ENCODE measurements at regions of chr7 and their contacts with region 1.

Region 1: GRCh38 chr7:104923010-104923421 is 91.0 kb upstream of the KMT2E start:
- DNase-seq: peak; percentile 87
- H3K4me3 Mint-ChIP-seq: no peak overlapping the region
- H3K27ac Mint-ChIP-seq: peak overlapping the region; percentile 18
- H3K4me1 Mint-ChIP-seq: peaks cover 4% of the 10 kb centered on the region
- H3K27me3 Mint-ChIP-seq: no peaks in the 10 kb centered on the region

Region 2: GRCh38 chr7:104231054-104232046 is 691.7 kb before region 1 on chr7:
- CTCF ChIA-PET with region 1: interaction called, 26 read pairs
- POLR2A ChIA-PET with region 1: no interaction called
- intact Hi-C with region 1: loop called (anchors 1 kb)
- DNase-seq: peak; percentile 46
- H3K4me3 Mint-ChIP-seq: no peak overlapping the region
- H3K27ac Mint-ChIP-seq: no peak overlapping the region
- H3K4me1 Mint-ChIP-seq: no peaks in the 10 kb centered on the region
- H3K27me3 Mint-ChIP-seq: peaks cover 10% of the 10 kb centered on the region

Region 3: GRCh38 chr7:104288137-104288536 is 634.9 kb before region 1 on chr7:
- CTCF ChIA-PET with region 1: no interaction called
- POLR2A ChIA-PET with region 1: no interaction called
- intact Hi-C with region 1: no loop called
- DNase-seq: no peak
- H3K4me3 Mint-ChIP-seq: no peak overlapping the region
- H3K27ac Mint-ChIP-seq: no peak overlapping the region
- H3K4me1 Mint-ChIP-seq: no peaks in the 10 kb centered on the region
- H3K27me3 Mint-ChIP-seq: peaks cover 9% of the 10 kb centered on the region

Region 4: DNA sequence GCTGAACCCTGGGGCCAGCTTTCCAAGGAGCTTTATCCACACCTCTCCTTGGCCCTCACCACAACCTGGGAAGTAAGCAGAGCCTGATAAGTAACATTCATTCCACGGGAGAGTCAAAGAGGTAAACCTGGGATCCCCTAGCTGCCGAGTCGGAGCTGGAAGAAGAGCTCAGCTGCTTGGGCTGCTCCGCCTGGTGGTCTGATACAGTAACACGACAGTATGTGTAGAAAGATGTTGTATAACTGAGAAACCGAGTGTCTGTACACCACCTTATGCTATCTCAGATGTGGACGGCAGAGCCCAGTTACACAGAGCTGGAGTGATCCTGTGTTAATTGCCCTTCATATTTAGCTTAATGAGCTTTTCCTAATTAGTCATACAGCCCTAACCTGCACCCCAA is 60.3 kb before region 1 on chr7:
- CTCF ChIA-PET with region 1: no interaction called
- POLR2A ChIA-PET with region 1: no interaction called
- intact Hi-C with region 1: loop called (anchors 5 kb)
- DNase-seq: no peak
- H3K4me3 Mint-ChIP-seq: no peak overlapping the region
- H3K27ac Mint-ChIP-seq: no peak overlapping the region
- H3K4me1 Mint-ChIP-seq: peaks cover 10% of the 10 kb centered on the region
- H3K27me3 Mint-ChIP-seq: peaks cover 16% of the 10 kb centered on the region

Region 5: GRCh38 chr7:104983578-104984539 is 60.8 kb after region 1 on chr7:
- CTCF ChIA-PET with region 1: interaction called, 76 read pairs
- POLR2A ChIA-PET with region 1: no interaction called
- intact Hi-C with region 1: loop called (anchors 1 kb)
- DNase-seq: peak; percentile 91
- H3K4me3 Mint-ChIP-seq: peak overlapping the region; percentile 100
- H3K27ac Mint-ChIP-seq: peak overlapping the region; percentile 100
- H3K4me1 Mint-ChIP-seq: peaks cover 74% of the 10 kb centered on the region
- H3K27me3 Mint-ChIP-seq: no peaks in the 10 kb centered on the region

Region 6: DNA sequence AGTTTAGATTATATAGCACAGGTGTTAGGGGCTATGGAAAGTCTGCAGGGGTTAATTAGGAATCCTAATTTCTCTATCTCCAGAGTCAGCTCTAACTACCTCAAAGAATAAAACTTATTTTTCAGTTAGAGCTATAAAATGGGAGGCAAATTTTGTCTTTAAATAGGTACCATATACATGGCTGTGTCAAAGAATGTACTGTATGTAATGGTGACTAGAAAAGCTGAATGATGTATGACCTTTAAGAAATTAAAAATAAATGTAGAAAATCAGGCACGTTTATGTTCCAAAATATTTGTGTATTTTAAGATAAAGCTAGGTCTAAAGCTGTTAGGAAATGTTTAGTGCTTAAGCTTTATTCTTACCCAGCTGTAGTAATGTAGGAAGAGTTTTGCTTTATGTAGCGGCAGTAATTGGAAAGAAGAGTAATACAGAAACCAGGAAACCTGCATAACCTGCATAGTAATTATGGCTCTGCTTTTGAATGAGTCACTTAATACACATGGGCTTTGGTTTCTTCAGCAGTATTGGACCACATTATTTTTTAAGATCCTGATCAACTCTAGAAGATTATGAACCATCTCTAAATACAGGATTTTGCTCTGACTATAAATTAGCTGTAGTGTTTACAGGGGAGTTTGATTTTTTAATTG is 176.0 kb after region 1 on chr7:
- CTCF ChIA-PET with region 1: no interaction called
- POLR2A ChIA-PET with region 1: no interaction called
- intact Hi-C with region 1: loop called (anchors 5 kb)
- DNase-seq: no peak
- H3K4me3 Mint-ChIP-seq: no peak overlapping the region
- H3K27ac Mint-ChIP-seq: peak overlapping the region; percentile 24
- H3K4me1 Mint-ChIP-seq: peaks cover 63% of the 10 kb centered on the region
- H3K27me3 Mint-ChIP-seq: no peaks in the 10 kb centered on the region

Region 7: DNA sequence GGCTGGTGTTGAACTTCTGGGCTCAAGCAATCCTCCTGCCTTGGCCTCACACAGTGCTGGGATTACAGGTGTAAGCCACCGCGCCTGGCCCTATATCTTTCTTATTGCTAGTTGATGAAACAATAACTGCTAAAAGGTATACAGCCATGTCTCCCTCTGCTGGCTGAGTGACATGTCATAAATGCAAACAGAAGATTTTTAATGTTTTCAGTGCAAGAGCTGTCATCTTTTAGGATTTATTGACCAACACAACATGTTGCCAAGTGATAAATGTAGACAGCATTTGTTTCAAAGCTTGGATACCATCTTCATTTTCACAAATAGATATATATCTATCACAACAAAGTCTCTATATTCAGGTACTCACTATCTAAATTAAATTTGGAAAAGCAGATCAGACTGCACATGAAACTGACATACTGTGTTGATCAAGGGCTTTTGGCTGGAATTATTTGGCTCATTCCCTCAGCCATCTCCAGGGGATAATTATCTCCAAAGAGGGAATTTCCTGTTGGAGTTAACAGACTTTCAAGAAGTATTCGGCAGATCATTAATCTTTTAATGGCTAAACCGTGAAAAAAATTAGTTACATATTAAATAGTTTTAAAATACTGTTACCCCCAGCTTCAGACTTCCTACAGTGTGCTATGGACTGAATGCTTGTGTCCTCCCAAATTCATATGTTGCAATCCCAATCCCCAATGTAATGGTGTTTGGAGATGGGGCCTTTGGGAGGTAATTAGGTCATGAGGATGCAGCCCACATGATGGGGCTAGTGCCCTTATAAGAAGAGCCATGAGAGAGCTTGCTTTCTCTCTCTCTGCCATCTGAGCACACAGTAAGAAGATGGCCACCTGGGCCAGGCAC is 507.0 kb after region 1 on chr7:
- CTCF ChIA-PET with region 1: interaction called, 3 read pairs
- POLR2A ChIA-PET with region 1: no interaction called
- intact Hi-C with region 1: loop called (anchors 1 kb)
- DNase-seq: peak; percentile 57
- H3K4me3 Mint-ChIP-seq: no peak overlapping the region
- H3K27ac Mint-ChIP-seq: no peak overlapping the region
- H3K4me1 Mint-ChIP-seq: peaks cover 19% of the 10 kb centered on the region
- H3K27me3 Mint-ChIP-seq: no peaks in the 10 kb centered on the region

Region 8: GRCh38 chr7:105589356-105590077 is 666.5 kb after region 1 on chr7:
- CTCF ChIA-PET with region 1: interaction called, 10 read pairs
- POLR2A ChIA-PET with region 1: no interaction called
- intact Hi-C with region 1: loop called (anchors 1 kb)
- DNase-seq: peak; percentile 75
- H3K4me3 Mint-ChIP-seq: no peak overlapping the region
- H3K27ac Mint-ChIP-seq: no peak overlapping the region
- H3K4me1 Mint-ChIP-seq: peaks cover 5% of the 10 kb centered on the region
- H3K27me3 Mint-ChIP-seq: no peaks in the 10 kb centered on the region

Measured in activated CD4-positive, alpha-beta memory T cell treated with anti-CD3 and anti-CD28 coated beads for 36 hours (primary cell).